MCF 10A (cell line): ENCODE measurements at regions of chr17 and their contacts with region 1.

Region 1: DNA sequence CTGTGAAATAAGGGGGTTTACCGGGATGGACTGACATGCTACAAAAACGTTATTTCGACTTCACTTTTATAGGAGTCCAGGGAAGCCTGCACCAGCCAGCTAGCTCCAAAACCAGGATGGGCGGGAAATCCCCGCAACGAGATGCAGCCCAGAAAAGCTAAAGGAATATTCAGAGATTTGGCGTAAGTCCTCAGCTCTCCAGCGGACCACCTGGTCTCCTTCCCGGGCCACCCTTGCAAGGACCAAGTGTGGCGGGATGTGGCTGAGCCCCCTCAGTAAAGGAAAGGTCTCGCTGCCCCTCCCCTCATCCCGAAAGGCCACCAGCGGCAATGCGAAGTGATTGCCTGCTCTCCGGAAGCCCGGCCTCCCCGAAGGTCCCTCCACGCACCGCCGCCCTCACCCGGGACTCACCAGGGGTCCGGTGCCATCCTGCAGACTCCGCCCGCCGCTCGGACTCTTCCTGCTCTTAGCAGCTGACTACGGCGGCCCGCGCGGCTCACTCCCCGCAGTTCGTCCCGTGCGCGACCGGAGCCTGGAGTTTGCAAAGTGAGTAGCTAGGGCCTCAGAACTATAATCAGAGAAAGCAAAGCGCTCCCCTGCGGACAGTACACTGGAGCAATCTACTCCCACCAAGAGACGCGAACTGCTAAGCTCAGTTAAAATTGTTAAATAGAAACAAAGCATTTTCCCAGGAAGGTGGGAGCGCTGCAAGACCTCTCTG is at the start of gene STX8:
- DNase-seq: peak; percentile 82
- H3K4me3 Mint-ChIP-seq: peak within 1 kb of the TSS; percentile 77
- H3K27ac Mint-ChIP-seq: peak within 1 kb of the TSS; percentile 74
- H3K4me1 Mint-ChIP-seq: peaks cover 15% of the 10 kb centered on the region
- H3K27me3 Mint-ChIP-seq: no peaks in the 10 kb centered on the region
- CTCF ChIP-seq: no peak
- total RNA-seq, gene STX8: 49.0 and 65.0 TPM in 2 replicates

Region 2: GRCh38 chr17:9644910-9645751 is 69.6 kb after region 1 on chr17 and contains the start of gene USP43:
- CTCF ChIA-PET with region 1: interaction called, 13 read pairs
- POLR2A ChIA-PET with region 1: interaction called, 27 read pairs
- intact Hi-C with region 1: no loop called
- DNase-seq: peak; percentile 72
- H3K4me3 Mint-ChIP-seq: peak within 1 kb of the TSS; percentile 75
- H3K27ac Mint-ChIP-seq: peak within 1 kb of the TSS; percentile 83
- H3K4me1 Mint-ChIP-seq: peaks cover 20% of the 10 kb centered on the region
- H3K27me3 Mint-ChIP-seq: no peaks in the 10 kb centered on the region
- CTCF ChIP-seq: no peak
- total RNA-seq, gene USP43: 1.9 and 3.2 TPM in 2 replicates

Region 3: GRCh38 chr17:9676742-9677387 is 101.3 kb after region 1 on chr17:
- CTCF ChIA-PET with region 1: interaction called, 17 read pairs
- POLR2A ChIA-PET with region 1: interaction called, 4 read pairs
- intact Hi-C with region 1: no loop called
- DNase-seq: peak; percentile 97
- H3K4me3 Mint-ChIP-seq: no peak overlapping the region
- H3K27ac Mint-ChIP-seq: peak overlapping the region; percentile 88
- H3K4me1 Mint-ChIP-seq: peaks cover 18% of the 10 kb centered on the region
- H3K27me3 Mint-ChIP-seq: no peaks in the 10 kb centered on the region
- CTCF ChIP-seq: no peak

Region 4: DNA sequence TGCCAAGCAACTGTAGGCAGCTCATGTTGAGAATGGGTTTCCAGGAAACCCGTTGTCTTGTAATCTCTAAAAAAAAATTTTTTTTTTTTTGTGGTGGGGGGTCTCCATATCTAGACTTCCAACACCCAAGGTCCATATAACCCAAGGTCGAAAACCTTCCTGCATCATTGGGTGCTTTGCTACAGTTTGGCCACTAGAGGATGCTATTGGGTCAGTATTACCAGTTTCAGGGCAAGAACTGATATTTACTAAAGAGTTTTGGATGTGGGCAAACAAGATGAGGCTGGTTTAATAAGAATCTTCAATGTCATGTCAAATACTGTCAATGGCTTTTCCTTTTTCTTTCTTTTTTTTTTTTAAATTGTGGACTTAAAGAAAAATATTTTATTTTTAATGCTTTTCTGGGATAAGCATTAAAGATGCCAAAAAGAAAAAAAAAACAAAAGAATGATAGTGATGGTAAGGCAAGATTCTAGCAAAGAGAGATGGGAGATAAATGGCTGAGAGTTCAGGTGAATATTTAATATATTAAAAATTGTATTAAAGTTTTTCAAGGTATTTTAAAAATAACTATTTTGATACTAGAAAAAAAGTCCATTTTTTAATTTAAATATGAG is 153.6 kb after region 1 on chr17:
- CTCF ChIA-PET with region 1: interaction called, 4 read pairs
- POLR2A ChIA-PET with region 1: interaction called, 3 read pairs
- intact Hi-C with region 1: loop called (anchors 1 kb)
- DNase-seq: peak; percentile 67
- H3K4me3 Mint-ChIP-seq: no peak overlapping the region
- H3K27ac Mint-ChIP-seq: no peak overlapping the region
- H3K4me1 Mint-ChIP-seq: peaks cover 7% of the 10 kb centered on the region
- H3K27me3 Mint-ChIP-seq: no peaks in the 10 kb centered on the region
- CTCF ChIP-seq: peak; percentile 89

Region 5: GRCh38 chr17:9768381-9768934 is 192.9 kb after region 1 on chr17:
- CTCF ChIA-PET with region 1: interaction called, 33 read pairs
- POLR2A ChIA-PET with region 1: no interaction called
- intact Hi-C with region 1: no loop called
- DNase-seq: peak; percentile 57
- H3K4me3 Mint-ChIP-seq: no peak overlapping the region
- H3K27ac Mint-ChIP-seq: no peak overlapping the region
- H3K4me1 Mint-ChIP-seq: peaks cover 4% of the 10 kb centered on the region
- H3K27me3 Mint-ChIP-seq: peaks cover 10% of the 10 kb centered on the region
- CTCF ChIP-seq: peak; percentile 60